ENCODE measurements at regions of chr6 and their contacts with region 1.

Region 1: DNA sequence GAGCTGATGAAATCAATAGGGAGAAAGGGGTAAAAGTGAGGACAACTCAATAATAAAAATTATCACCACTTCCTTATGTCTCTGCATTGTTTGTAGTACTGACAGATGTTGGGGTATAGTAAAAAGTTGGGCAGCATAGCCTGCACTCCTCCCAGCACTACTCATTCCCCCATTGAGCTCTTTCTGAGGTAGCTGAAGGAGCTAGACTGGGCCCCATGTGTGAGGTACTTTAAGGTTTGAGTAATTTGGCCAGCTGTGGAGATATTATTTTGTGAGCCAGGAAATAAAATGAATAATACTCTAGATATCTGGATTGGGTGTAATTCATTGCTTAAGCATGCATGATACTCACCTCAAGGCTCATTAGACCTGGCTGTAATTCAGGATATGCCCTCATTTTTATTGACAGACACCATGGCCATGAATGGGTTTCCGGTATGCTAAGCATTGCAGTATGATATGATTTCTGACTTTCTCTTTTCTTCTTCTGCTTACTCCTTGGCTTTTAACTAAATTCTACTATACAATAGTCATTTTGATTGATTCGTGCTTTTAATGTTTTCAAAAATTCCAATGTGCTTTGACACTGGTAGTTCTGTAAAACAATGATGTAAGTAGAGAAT is 283.9 kb upstream of the RIMS1 start:
- DNase-seq: peak; percentile 71
- H3K4me3 Mint-ChIP-seq: no peak overlapping the region
- H3K27ac Mint-ChIP-seq: peak overlapping the region; percentile 78
- H3K4me1 Mint-ChIP-seq: peaks cover 88% of the 10 kb centered on the region
- H3K27me3 Mint-ChIP-seq: no peaks in the 10 kb centered on the region
- CTCF ChIP-seq: no peak

Region 2: DNA sequence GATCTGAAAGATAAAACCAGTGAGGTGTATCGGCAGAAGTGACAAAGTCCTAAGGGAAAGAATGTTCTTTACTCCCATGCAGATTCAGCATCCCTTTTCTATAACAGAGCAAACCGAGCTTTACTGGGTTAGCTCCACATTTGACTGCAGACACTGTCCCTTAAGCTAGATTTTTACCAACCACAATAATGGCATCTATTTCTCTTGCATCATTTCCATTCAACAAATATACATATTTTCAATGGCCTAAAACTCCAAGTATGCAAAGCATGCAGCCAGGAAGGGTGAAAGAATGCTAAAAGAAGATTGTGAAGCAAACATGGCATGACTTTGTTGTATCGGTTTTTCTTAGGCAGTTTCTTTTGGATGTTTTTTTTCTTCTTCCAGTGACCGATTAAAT is 58.5 kb before region 1 on chr6:
- CTCF ChIA-PET with region 1: no interaction called
- intact Hi-C with region 1: loop called (anchors 5 kb)
- DNase-seq: no peak
- H3K4me3 Mint-ChIP-seq: no peak overlapping the region
- H3K27ac Mint-ChIP-seq: no peak overlapping the region
- H3K4me1 Mint-ChIP-seq: peaks cover 23% of the 10 kb centered on the region
- H3K27me3 Mint-ChIP-seq: no peaks in the 10 kb centered on the region
- CTCF ChIP-seq: no peak